Heart right ventricle (tissue), 16 donors: ENCODE measurements at regions of chr1 and their contacts with region 1.

Region 1: GRCh38 chr1:110674337-110675059 is at the start of gene KCNA3:
- DNase-seq: peak; percentile 18 to 38
- ATAC-seq: peak; percentile 50 to 80 (median 71)
- H3K4me3 ChIP-seq: peak within 1 kb of the TSS; percentile 49 to 70 (median 62)
- H3K27ac ChIP-seq: peak within 1 kb of the TSS in 6 of 10 donors; percentile 21 to 84 (median 42)
- H3K4me1 ChIP-seq: peaks cover 0 to 44% (median 13%) of the 10 kb centered on the region in 9 donors
- H3K27me3 ChIP-seq: peaks cover 8 to 73% (median 59%) of the 10 kb centered on the region in 7 donors
- CTCF ChIP-seq: peak in 1 of 9 donors; percentile 39
- total RNA-seq, gene KCNA3: 0.16 to 1.8 (median 0.40) TPM in 9 of 10 donors, not detected in the other

Region 2: DNA sequence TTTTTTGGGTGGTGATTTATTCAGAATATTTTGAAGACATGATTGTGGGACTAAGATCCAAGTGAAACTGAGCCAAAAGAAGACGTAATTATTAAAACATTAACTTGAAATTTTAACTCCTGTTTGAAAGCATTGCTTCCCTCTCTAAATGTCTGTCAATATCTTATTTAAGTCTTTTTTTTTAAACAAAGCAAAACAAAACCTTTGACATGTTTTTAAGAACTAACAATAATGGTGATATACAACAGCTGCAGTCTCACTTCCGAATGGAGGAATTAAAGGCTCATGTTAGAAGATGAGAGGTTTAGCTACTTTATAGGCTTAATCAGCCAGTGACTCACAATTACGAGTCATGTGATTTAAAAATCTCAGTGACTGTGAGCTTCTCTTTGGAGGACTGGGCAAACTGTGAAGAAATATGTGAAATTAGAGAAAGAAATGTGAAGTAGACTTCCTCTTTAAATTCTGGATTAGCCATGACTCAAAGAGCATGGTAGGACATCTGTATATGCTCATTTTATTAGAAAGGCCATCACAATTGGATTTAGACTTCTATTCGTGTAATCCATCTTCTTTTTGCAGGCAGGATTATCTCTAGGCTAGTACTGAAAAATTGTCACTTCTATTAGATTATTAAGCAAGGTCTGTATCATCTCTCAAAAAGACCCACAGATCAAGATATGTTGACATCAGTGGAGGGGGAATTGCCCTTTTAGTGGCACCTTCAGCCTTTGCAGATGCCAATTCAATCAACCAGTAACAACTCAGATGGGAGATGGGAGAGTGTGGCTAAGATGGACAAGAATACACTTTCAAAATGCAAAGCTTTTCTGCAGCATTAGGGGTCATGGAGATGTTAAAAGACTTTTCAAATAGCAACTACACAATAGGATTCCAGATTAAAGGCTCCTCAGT is 28.4 kb before region 1 on chr1:
- intact Hi-C with region 1: loop called in 1 of 10 experiments (anchors 2 kb)
- DNase-seq: no peak
- ATAC-seq: peak in 7 of 8 donors; percentile 46 to 81 (median 62)
- H3K4me3 ChIP-seq: no peak overlapping the region
- H3K27ac ChIP-seq: peak overlapping the region in 6 of 10 donors; percentile 8 to 71 (median 42)
- H3K4me1 ChIP-seq: peaks cover 0 to 73% (median 24%) of the 10 kb centered on the region in 9 donors
- H3K27me3 ChIP-seq: peaks cover 0 to 9% (median 5%) of the 10 kb centered on the region in 7 donors
- CTCF ChIP-seq: no peak

Region 3: DNA sequence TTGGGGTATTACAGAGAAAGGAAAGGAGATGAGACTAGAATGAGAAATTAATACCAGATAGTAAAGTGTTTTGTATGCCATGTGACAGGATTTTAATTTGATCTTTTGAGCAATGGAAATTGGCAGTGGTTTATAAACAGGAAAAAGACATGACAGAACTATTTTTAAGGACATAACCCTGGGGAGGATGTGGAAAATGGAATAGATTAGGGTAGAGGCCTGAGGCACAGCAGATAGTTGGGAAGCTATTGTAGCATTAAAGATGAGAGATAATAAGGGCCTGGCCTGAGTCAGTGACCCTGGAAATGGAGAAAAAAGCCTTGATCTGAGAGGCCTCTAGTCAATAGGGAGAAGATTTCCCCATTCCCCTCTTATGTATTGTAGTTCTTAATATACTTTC is 22.3 kb after region 1 on chr1:
- intact Hi-C with region 1: no loop called
- DNase-seq: no peak
- ATAC-seq: no peak
- H3K4me3 ChIP-seq: no peak overlapping the region
- H3K27ac ChIP-seq: no peak overlapping the region
- H3K4me1 ChIP-seq: peaks cover 0 to 13% (median 0%) of the 10 kb centered on the region in 9 donors
- H3K27me3 ChIP-seq: no peaks in the 10 kb centered on the region
- CTCF ChIP-seq: no peak

Region 4: DNA sequence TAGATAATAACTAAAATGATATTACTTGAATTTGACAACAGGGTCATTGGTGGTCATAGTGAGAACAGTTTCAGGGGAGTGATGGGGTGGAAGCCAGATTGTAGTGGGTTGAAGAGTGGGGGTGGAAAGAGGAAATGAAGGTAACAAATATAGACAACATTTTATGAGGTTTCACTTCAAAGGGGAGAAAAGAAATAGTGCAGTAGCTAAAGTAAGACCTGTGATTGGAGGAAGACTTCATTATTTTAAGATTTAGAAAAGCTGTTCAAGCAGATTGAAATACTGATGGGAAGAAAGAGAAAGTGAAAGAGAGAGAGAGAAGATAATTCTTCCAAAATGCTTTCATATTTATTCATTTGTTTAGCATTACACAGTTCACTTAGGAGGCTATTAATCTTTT is 52.3 kb after region 1 on chr1:
- intact Hi-C with region 1: no loop called
- DNase-seq: no peak
- ATAC-seq: no peak
- H3K4me3 ChIP-seq: no peak overlapping the region
- H3K27ac ChIP-seq: peak overlapping the region in 1 of 10 donors; percentile 28
- H3K4me1 ChIP-seq: peaks cover 0 to 10% (median 0%) of the 10 kb centered on the region in 9 donors
- H3K27me3 ChIP-seq: peaks cover 0 to 16% (median 0%) of the 10 kb centered on the region in 7 donors
- CTCF ChIP-seq: no peak